Endothelial cell of umbilical vein (primary cell): ENCODE measurements at regions of chr1 and their contacts with region 1.

Region 1: DNA sequence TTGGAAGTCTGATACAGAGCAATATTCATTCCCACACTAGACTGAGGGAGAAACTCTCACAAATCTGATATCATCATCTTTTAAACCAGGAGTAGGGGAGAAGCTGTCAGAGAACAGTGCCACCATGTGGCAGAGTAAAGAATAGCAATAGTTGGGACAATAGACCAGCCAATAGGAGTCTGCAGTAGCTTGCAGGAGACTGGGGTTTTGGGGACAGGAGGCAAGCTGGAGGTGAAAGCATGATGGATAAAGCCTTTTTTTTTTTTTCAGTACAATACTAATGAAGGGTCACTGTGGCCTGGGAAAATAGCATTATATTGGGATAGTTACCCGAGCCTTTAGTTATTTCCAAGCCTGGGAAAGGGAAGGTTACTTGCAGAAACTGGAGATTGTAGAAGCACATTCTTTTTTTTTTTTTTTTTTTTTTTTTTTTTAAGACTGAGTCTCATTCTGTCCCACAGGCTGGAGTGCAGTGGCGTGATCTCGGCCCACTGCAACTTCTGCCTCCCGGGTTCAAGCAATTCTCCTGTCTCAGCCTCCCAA is 120.7 kb downstream of the S1PR1 start:
- DNase-seq: peak; percentile 88
- H3K4me3 ChIP-seq: no peak overlapping the region
- H3K27ac ChIP-seq: no peak overlapping the region
- H3K4me1 ChIP-seq: no peaks in the 10 kb centered on the region
- H3K27me3 ChIP-seq: no peaks in the 10 kb centered on the region
- CTCF ChIP-seq: peak; percentile 73 to 88
- POLR2A ChIP-seq: no peak

Region 2: GRCh38 chr1:100921109-100921706 is 436.3 kb before region 1 on chr1:
- CTCF ChIA-PET with region 1: interaction called, 8 read pairs
- POLR2A ChIA-PET with region 1: no interaction called
- dilution Hi-C with region 1: no loop called
- intact Hi-C with region 1: loop called (anchors 1 kb)
- DNase-seq: peak; percentile 81
- H3K4me3 ChIP-seq: no peak overlapping the region
- H3K27ac ChIP-seq: no peak overlapping the region
- H3K4me1 ChIP-seq: peaks cover 11% of the 10 kb centered on the region
- H3K27me3 ChIP-seq: no peaks in the 10 kb centered on the region
- CTCF ChIP-seq: peak; percentile 24
- POLR2A ChIP-seq: no peak

Region 3: DNA sequence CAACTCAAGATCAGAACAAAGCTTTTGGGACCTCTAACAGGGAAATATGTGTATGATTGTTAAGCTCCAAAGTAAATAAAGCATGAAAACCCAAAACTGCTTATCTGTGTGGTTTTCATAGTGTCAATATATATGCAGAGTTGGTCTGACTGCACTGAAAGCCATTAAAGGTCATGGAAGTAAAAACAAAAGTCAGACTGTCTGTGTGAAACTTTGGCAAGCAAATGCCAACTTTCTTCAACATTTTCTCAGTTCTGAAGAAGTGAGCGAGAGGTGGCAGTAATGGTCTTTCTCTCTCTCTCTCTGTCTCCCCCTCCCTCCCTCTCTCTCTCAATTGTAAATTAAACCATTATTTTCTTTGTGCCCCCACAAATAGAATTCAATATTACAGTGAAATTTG is 220.8 kb before region 1 on chr1:
- CTCF ChIA-PET with region 1: interaction called, 20 read pairs
- POLR2A ChIA-PET with region 1: no interaction called
- dilution Hi-C with region 1: no loop called
- intact Hi-C with region 1: loop called (anchors 1 kb)
- DNase-seq: peak; percentile 91
- H3K4me3 ChIP-seq: no peak overlapping the region
- H3K27ac ChIP-seq: no peak overlapping the region
- H3K4me1 ChIP-seq: peaks cover 28% of the 10 kb centered on the region
- H3K27me3 ChIP-seq: no peaks in the 10 kb centered on the region
- CTCF ChIP-seq: peak; percentile 33 to 43
- POLR2A ChIP-seq: no peak

Region 4: GRCh38 chr1:101346419-101346818 is 11.1 kb before region 1 on chr1:
- CTCF ChIA-PET with region 1: interaction called, 10 read pairs
- POLR2A ChIA-PET with region 1: no interaction called
- dilution Hi-C with region 1: no loop called
- intact Hi-C with region 1: no loop called
- DNase-seq: no peak
- H3K4me3 ChIP-seq: no peak overlapping the region
- H3K27ac ChIP-seq: no peak overlapping the region
- H3K4me1 ChIP-seq: no peaks in the 10 kb centered on the region
- H3K27me3 ChIP-seq: peaks cover 0 to 1% of the 10 kb centered on the region in 2 experiments
- CTCF ChIP-seq: no peak
- POLR2A ChIP-seq: no peak

Region 5: GRCh38 chr1:101410048-101410878 is 52.7 kb after region 1 on chr1:
- CTCF ChIA-PET with region 1: interaction called, 13 read pairs
- POLR2A ChIA-PET with region 1: no interaction called
- dilution Hi-C with region 1: no loop called
- intact Hi-C with region 1: no loop called
- DNase-seq: peak; percentile 88
- H3K4me3 ChIP-seq: peak overlapping the region in 1 of 3 experiments; percentile 33
- H3K27ac ChIP-seq: peak overlapping the region; percentile 69
- H3K4me1 ChIP-seq: peaks cover 19% of the 10 kb centered on the region
- H3K27me3 ChIP-seq: no peaks in the 10 kb centered on the region
- CTCF ChIP-seq: no peak
- POLR2A ChIP-seq: no peak